Activated T-helper 2 cell treated with anti-CD3 and anti-CD28 coated beads, Interferon-gamma antibody, Interleukin-2, Interleukin-4, amounts not matched to agents 10 μg/mL and 5 μg/mL and 100 μg/mL, durations not matched to agents 14 hours and 24 hours and 36 hours (primary cell): ENCODE measurements at regions of chrX and their contacts with region 1.

Region 1: GRCh38 chrX:12946838-12947544 is 27.9 kb upstream of the TMSB4X start:
- DNase-seq: peak; percentile 64
- H3K4me3 Mint-ChIP-seq: peak overlapping the region; percentile 30
- H3K27ac Mint-ChIP-seq: peak overlapping the region; percentile 87
- H3K4me1 Mint-ChIP-seq: peaks cover 56% of the 10 kb centered on the region
- H3K27me3 Mint-ChIP-seq: no peaks in the 10 kb centered on the region

Region 2: GRCh38 chrX:12974796-12975669 is 28.0 kb after region 1 on chrX and contains the start of gene TMSB4X:
- intact Hi-C with region 1: loop called (anchors 1 kb)
- DNase-seq: peak; percentile 84
- H3K4me3 Mint-ChIP-seq: peak within 1 kb of the TSS; percentile 96
- H3K27ac Mint-ChIP-seq: peak within 1 kb of the TSS; percentile 95
- H3K4me1 Mint-ChIP-seq: peaks cover 35% of the 10 kb centered on the region
- H3K27me3 Mint-ChIP-seq: no peaks in the 10 kb centered on the region
- total RNA-seq, gene TMSB4X: 7,759 and 7,983 TPM in 2 replicates

Region 3: DNA sequence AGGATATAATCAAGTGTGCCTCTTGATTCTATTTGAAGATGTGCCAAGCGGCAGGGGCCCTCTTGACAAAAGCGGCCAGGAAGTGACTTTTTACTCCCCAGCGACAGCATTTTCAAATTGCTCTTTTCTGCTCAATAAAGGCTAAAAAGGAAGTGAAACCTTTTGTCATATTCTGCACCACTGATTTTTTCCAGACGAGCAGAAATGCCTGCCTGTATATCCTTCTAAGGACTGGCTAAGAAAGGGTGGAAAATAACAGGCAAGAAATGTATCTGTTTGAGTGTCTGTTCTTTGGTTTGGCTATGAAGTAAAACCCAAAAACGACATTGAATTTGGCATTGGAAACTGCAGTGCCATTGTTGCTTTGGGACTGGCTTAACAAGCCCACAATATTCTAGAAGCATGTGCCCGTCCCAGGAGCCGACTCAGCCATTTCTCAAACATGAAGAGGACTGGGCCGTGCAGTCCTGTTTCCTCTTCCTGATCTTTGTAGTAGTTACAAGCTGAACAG is 53.4 kb after region 1 on chrX:
- intact Hi-C with region 1: loop called (anchors 1 kb)
- DNase-seq: no peak
- H3K4me3 Mint-ChIP-seq: peak overlapping the region; percentile 66
- H3K27ac Mint-ChIP-seq: peak overlapping the region; percentile 98
- H3K4me1 Mint-ChIP-seq: peaks cover 62% of the 10 kb centered on the region
- H3K27me3 Mint-ChIP-seq: no peaks in the 10 kb centered on the region

Region 4: DNA sequence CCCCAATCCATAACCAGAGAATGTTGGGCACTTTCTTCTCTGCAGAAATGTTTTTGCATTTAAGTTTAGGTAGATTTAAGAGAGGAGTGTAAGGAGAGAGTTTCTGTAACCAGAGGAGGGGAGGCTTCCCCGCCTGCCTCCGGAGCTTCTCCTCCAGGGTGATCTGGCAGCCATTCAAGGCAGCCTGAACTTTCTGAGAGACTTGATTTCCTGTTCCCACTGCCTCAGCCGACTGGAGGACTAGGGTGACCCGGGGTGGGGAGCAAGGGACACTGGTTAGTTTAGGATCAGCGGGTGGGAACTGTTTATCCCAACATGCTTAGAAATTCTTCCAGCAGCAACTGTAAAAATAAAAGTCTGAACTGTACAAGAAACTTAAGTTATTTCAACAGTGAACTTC is 82.3 kb after region 1 on chrX:
- intact Hi-C with region 1: no loop called
- DNase-seq: no peak
- H3K4me3 Mint-ChIP-seq: no peak overlapping the region
- H3K27ac Mint-ChIP-seq: peak overlapping the region; percentile 14
- H3K4me1 Mint-ChIP-seq: peaks cover 55% of the 10 kb centered on the region
- H3K27me3 Mint-ChIP-seq: no peaks in the 10 kb centered on the region

Region 5: GRCh38 chrX:13167481-13168231 is 220.7 kb after region 1 on chrX:
- intact Hi-C with region 1: loop called (anchors 5 kb)
- DNase-seq: no peak
- H3K4me3 Mint-ChIP-seq: peak overlapping the region; percentile 17
- H3K27ac Mint-ChIP-seq: peak overlapping the region; percentile 86
- H3K4me1 Mint-ChIP-seq: peaks cover 22% of the 10 kb centered on the region
- H3K27me3 Mint-ChIP-seq: no peaks in the 10 kb centered on the region

Region 6: DNA sequence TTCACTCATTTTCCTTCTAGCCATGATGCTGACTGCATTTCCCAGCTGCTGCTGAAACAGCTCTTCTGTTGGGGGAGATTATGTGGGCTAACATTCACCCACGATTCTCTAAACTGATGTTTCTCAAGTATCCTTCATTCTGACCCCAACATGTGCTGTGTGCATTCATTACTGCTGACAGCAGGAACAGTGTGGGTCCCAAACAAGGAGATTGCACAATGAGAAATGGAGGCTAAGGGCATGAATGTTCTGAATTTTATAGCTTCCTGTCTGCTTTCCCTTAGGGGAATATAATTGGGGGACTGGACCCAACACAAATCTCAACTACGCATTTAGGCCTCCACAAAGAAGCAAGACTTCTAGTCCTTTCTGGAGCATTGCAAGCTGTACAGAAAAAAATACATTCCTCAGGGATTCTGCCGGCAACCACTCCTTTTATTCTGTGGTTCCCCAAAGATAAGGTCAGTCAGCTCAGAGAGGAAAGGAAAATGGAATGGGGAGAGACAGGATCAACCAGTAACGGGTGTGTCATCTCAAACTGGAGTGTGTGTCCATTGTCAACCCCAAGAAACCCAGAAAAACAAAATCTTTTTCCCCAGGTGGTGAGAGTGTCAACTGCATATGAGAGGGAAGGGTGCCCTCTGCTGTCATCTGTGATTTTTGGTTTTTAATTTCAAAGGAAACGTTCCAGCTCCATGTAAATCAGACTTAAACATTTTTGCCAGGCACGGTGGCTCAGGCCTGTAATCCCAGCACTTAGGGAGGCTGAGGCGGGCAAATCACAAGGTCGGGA is 540.9 kb after region 1 on chrX:
- intact Hi-C with region 1: loop called (anchors 1 kb)
- DNase-seq: peak; percentile 14
- H3K4me3 Mint-ChIP-seq: no peak overlapping the region
- H3K27ac Mint-ChIP-seq: peak overlapping the region; percentile 81
- H3K4me1 Mint-ChIP-seq: peaks cover 11% of the 10 kb centered on the region
- H3K27me3 Mint-ChIP-seq: no peaks in the 10 kb centered on the region

Region 7: DNA sequence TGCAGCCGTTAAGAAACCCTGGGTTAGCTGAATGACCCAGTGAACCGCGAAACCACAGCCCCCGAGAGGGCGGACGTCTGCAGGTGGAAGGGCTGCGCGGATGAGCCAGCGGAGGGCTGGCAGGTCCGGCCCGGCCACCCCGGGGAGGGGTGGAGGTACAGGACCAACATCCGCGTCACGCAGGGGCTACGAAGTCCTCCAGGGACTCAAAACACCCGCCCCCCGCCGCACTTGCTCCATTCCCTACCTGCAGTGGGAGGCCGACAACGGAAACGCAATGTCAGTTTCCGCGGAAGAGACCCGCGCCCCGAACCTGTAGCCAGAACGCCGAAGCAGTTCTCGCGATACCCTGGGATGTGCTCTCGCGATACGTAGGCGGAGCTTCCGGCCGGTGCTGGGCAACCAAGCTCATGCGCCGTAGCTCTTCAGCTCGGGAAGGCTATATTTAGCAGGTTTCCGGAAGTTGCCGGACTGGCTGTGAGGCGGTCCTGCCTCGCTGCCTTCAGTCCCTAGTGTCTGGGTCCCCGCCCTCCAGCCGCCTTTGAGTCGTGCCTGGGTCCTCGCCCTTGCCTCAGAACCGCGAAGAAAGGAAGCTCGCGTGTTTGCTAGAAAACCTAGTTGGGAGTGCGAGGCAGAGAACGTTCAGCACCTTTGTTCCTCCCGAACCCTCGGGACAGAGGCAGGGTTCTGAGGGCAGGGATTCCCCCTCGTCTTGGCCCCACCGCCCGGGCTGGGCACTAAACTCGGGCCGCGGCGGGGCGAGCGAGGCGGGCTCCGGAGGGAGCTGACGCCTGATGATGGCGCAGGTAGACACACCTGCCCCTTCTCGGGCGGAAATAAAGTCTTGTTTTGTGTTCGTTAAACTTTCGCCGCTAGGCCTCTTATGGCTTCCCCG is 787.5 kb after region 1 on chrX and contains the starts of genes OFD1 and TRAPPC2:
- intact Hi-C with region 1: loop called (anchors 10 kb)
- DNase-seq: peak; percentile 87
- H3K4me3 Mint-ChIP-seq: peak within 1 kb of the TSS; percentile 95
- H3K27ac Mint-ChIP-seq: peak within 1 kb of the TSS; percentile 96
- H3K4me1 Mint-ChIP-seq: peaks cover 39% of the 10 kb centered on the region
- H3K27me3 Mint-ChIP-seq: no peaks in the 10 kb centered on the region
- total RNA-seq, gene OFD1: 21.0 and 23.4 TPM in 2 replicates
- total RNA-seq, gene TRAPPC2: 14.7 and 15.2 TPM in 2 replicates